ENCODE measurements at regions of chr7 and their contacts with region 1.

Region 1: DNA sequence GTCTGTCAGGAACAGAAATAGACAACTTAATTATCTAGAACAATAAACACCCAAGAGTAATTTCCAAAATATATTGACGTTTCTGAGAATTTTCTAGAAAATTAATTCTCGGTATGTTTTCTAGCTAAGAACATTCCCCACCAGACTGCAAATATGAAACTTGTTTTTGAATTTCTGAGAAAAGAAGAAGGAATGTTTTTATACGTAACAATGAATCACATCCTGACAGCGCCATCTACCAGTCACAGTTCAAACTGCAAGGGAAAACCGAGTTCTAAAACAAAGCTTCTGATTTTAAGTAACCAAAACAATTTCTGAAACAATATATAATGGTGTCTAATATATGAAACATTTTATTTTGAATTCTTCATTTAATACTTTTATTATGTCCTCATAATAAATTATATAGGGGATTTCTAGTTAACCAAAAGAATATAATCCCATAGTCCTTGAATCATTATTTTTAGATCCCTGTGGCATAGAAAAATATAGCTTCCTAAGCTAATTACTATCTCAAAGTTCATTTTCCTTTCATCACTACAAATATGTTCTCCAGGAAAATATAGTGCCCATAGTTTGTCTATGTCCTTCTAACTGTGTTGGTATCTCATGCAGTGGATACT is 34.5 kb upstream of the MEOX2 start:
- DNase-seq: no peak
- H3K27ac ChIP-seq: no peak overlapping the region
- CTCF ChIP-seq: peak; percentile 92

Region 2: GRCh38 chr7:15737601-15738000 is 16.6 kb after region 1 on chr7:
- CTCF ChIA-PET with region 1: interaction called, 11 read pairs
- POLR2A ChIA-PET with region 1: no interaction called
- DNase-seq: no peak
- H3K27ac ChIP-seq: no peak overlapping the region
- CTCF ChIP-seq: no peak

Measured in RWPE1 (cell line).